Naive thymus-derived CD4-positive, alpha-beta T cell (primary cell): ENCODE measurements at regions of chr6 and their contacts with region 1.

Region 1: GRCh38 chr6:20126789-20127653 is 85.2 kb downstream of the MBOAT1 start:
- DNase-seq: peak in 8 of 9 donors; percentile 9 to 66 (median 38)
- ATAC-seq: peak; percentile 75
- H3K4me3 ChIP-seq: no peak overlapping the region
- H3K4me3 Mint-ChIP-seq: no peak overlapping the region
- H3K27ac ChIP-seq: no peak overlapping the region
- H3K27ac Mint-ChIP-seq: no peak overlapping the region
- H3K4me1 ChIP-seq: no peaks in the 10 kb centered on the region
- H3K4me1 Mint-ChIP-seq: peaks cover 0 to 11% (median 4%) of the 10 kb centered on the region in 7 donors
- H3K27me3 ChIP-seq: no peaks in the 10 kb centered on the region
- H3K27me3 Mint-ChIP-seq: no peaks in the 10 kb centered on the region

Region 2: DNA sequence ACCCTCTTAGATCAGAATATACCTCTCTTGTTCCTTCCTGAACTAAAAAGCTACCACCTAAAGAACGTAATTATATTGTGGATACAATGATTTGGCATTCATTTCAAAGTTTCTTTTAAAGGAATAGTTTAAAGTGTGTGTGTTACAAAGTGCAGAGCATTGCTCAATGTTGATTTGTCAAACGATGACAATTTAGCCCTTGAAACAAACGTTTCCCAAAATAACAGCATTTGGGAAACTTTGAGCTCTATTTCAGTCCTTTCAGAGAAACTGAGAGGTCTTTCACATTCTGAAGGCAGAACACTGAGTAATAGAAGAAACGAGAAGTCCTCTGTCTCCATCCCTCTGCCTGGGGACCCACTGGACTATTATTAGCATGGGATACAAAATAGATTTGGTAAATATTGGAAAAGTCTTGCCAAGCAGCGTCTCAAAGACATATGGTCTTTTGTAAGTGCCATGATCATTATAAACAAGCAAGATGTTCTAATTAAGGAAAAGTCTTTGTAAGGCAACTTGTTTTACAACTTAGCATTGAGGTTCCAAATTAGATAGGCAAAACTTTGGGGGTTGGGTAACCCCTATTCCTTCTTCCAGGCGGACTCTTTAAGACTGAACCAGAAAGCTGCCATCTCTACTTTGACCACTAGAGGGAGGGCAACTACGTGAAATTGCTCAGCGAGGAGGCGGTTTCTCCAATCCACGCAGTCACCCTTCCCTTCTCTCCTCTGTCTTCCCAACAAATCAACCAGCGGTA is 1531.1 kb before region 1 on chr6:
- CTCF ChIA-PET with region 1: no interaction called
- POLR2A ChIA-PET with region 1: no interaction called
- intact Hi-C with region 1: loop called in 1 of 2 experiments (anchors 2 kb)
- DNase-seq: peak in 6 of 9 donors; percentile 9 to 30 (median 21)
- ATAC-seq: peak; percentile 63
- H3K4me3 ChIP-seq: no peak overlapping the region
- H3K4me3 Mint-ChIP-seq: peak overlapping the region in 3 of 10 donors; percentile 12 to 47 (median 39)
- H3K27ac ChIP-seq: no peak overlapping the region
- H3K27ac Mint-ChIP-seq: no peak overlapping the region
- H3K4me1 ChIP-seq: no peaks in the 10 kb centered on the region
- H3K4me1 Mint-ChIP-seq: peaks cover 0 to 2% (median 0%) of the 10 kb centered on the region in 7 donors
- H3K27me3 ChIP-seq: no peaks in the 10 kb centered on the region
- H3K27me3 Mint-ChIP-seq: peaks cover 2 to 26% (median 17%) of the 10 kb centered on the region in 5 donors

Region 3: DNA sequence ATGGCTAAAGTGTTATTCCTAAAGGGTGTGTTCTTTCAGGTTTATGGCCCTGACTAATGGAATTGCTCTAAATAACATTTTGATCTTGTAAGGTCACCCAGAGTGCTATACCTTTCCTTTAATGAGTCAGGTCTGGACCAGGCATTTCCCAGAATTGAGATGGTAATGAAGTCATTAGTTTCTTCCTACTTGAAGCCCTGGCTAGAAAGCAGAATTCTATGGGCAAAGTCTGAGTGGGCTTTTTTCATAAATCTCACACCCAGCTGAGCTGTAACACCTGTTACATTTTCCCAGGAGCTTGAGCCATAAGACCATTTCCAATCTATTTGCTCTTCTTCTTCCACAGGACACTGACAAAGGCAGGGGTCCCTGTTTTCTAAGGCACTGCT is 411.9 kb before region 1 on chr6:
- CTCF ChIA-PET with region 1: no interaction called
- POLR2A ChIA-PET with region 1: no interaction called
- intact Hi-C with region 1: no loop called
- DNase-seq: no peak
- ATAC-seq: no peak
- H3K4me3 ChIP-seq: no peak overlapping the region
- H3K4me3 Mint-ChIP-seq: no peak overlapping the region
- H3K27ac ChIP-seq: no peak overlapping the region
- H3K27ac Mint-ChIP-seq: no peak overlapping the region
- H3K4me1 ChIP-seq: no peaks in the 10 kb centered on the region
- H3K4me1 Mint-ChIP-seq: no peaks in the 10 kb centered on the region
- H3K27me3 ChIP-seq: no peaks in the 10 kb centered on the region
- H3K27me3 Mint-ChIP-seq: peaks cover 0 to 3% (median 0%) of the 10 kb centered on the region in 5 donors

Region 4: DNA sequence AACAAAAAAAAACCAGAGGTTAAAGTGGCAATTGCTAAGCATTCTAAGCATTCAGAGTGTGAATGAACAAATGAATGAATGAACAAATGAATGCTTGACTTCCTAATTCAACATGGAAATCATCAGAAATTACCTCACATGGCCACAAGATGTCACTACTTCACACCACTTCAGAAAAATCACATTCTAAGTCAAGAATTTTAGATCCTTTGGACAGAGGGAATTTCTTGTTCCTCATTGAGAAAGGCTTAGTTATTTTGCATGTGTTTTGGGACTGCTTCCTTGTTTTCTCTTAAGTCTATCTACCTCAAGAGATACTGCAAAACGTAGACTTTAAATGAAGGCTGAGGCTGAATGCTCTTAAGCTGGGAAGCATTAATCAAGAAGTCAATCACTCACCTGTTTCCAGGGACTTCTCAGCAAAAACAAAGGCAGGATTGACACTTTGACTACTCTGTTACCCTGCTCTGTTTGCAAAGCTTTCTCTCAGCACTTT is 34.9 kb before region 1 on chr6:
- CTCF ChIA-PET with region 1: interaction called, 4 read pairs
- POLR2A ChIA-PET with region 1: no interaction called
- intact Hi-C with region 1: loop called in 1 of 2 experiments (anchors 2 kb)
- DNase-seq: peak in 5 of 9 donors; percentile 10 to 23 (median 14)
- ATAC-seq: no peak
- H3K4me3 ChIP-seq: no peak overlapping the region
- H3K4me3 Mint-ChIP-seq: no peak overlapping the region
- H3K27ac ChIP-seq: no peak overlapping the region
- H3K27ac Mint-ChIP-seq: no peak overlapping the region
- H3K4me1 ChIP-seq: no peaks in the 10 kb centered on the region
- H3K4me1 Mint-ChIP-seq: no peaks in the 10 kb centered on the region
- H3K27me3 ChIP-seq: no peaks in the 10 kb centered on the region
- H3K27me3 Mint-ChIP-seq: no peaks in the 10 kb centered on the region

Region 5: GRCh38 chr6:20202324-20202658 is 75.3 kb after region 1 on chr6:
- CTCF ChIA-PET with region 1: no interaction called
- POLR2A ChIA-PET with region 1: no interaction called
- intact Hi-C with region 1: loop called in 1 of 2 experiments (anchors 2 kb)
- DNase-seq: no peak
- ATAC-seq: no peak
- H3K4me3 ChIP-seq: no peak overlapping the region
- H3K4me3 Mint-ChIP-seq: no peak overlapping the region
- H3K27ac ChIP-seq: no peak overlapping the region
- H3K27ac Mint-ChIP-seq: peak overlapping the region in 1 of 9 donors; percentile 50
- H3K4me1 ChIP-seq: peaks cover 16 to 47% of the 10 kb centered on the region in 2 donors
- H3K4me1 Mint-ChIP-seq: peaks cover 29 to 71% (median 38%) of the 10 kb centered on the region in 7 donors
- H3K27me3 ChIP-seq: no peaks in the 10 kb centered on the region
- H3K27me3 Mint-ChIP-seq: no peaks in the 10 kb centered on the region

Region 6: DNA sequence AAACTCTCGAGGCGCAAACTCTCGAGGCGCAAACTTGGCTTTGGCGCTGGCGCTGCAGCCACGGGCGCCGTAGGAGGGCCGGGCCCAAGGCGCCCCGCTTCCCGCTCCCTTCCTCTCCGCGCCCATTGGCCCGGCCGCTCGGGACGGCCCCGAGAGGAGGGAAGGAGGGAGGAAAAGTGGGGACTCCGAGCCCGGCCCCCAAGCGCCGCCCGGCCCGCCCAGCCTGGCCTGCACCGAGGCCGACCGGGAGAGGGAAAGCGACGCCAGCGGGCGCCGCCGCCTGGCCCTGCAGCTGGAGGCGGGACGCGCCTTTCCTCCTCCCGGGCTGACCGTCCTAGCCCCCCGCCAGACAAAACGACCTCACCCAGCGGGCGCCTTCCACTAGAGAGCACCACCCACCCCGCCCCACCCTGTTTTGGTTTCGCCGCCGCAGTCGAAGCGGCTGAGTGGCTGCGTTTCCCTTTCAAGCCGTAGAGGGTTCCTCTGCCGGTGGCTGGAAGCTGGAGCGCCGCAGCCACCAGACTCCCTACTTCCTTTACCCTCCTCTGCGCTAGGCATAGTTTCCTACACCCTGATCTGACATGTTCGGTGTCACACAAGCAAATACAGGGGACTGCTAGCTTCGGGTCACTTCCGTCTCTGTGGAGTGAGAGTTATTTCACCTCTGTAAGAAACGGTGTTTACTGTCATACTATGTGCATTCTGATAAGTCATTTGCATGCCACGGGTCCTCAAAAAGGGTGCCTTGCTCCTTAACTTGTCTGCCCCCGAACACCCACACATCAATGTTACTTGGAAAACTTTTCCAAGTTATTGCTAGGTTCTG is 85.6 kb after region 1 on chr6 and contains the start of gene MBOAT1:
- CTCF ChIA-PET with region 1: no interaction called
- POLR2A ChIA-PET with region 1: no interaction called
- intact Hi-C with region 1: loop called (anchors 1 to 2 kb)
- DNase-seq: peak; percentile 38 to 85 (median 54)
- ATAC-seq: peak; percentile 82
- H3K4me3 ChIP-seq: peak within 1 kb of the TSS; percentile 73
- H3K4me3 Mint-ChIP-seq: peak within 1 kb of the TSS; percentile 82 to 99 (median 96)
- H3K27ac ChIP-seq: peak within 1 kb of the TSS; percentile 62
- H3K27ac Mint-ChIP-seq: peak within 1 kb of the TSS; percentile 56 to 94 (median 91)
- H3K4me1 ChIP-seq: peaks cover 11 to 20% of the 10 kb centered on the region in 2 donors
- H3K4me1 Mint-ChIP-seq: peaks cover 18 to 41% (median 27%) of the 10 kb centered on the region in 7 donors
- H3K27me3 ChIP-seq: no peaks in the 10 kb centered on the region
- H3K27me3 Mint-ChIP-seq: peaks cover 0 to 5% (median 0%) of the 10 kb centered on the region in 5 donors
- total RNA-seq, gene MBOAT1: 6.2 to 24.7 (median 10.0) TPM

Region 7: GRCh38 chr6:20279608-20280287 is 152.7 kb after region 1 on chr6:
- CTCF ChIA-PET with region 1: no interaction called
- POLR2A ChIA-PET with region 1: no interaction called
- intact Hi-C with region 1: loop called in 1 of 2 experiments (anchors 10 kb)
- DNase-seq: no peak
- ATAC-seq: no peak
- H3K4me3 ChIP-seq: no peak overlapping the region
- H3K4me3 Mint-ChIP-seq: no peak overlapping the region
- H3K27ac ChIP-seq: no peak overlapping the region
- H3K27ac Mint-ChIP-seq: no peak overlapping the region
- H3K4me1 ChIP-seq: no peaks in the 10 kb centered on the region
- H3K4me1 Mint-ChIP-seq: no peaks in the 10 kb centered on the region
- H3K27me3 ChIP-seq: peaks cover 0 to 6% of the 10 kb centered on the region in 2 donors
- H3K27me3 Mint-ChIP-seq: peaks cover 21 to 52% (median 30%) of the 10 kb centered on the region in 5 donors